ENCODE measurements at regions of chr2 and their contacts with region 1.

Region 1: DNA sequence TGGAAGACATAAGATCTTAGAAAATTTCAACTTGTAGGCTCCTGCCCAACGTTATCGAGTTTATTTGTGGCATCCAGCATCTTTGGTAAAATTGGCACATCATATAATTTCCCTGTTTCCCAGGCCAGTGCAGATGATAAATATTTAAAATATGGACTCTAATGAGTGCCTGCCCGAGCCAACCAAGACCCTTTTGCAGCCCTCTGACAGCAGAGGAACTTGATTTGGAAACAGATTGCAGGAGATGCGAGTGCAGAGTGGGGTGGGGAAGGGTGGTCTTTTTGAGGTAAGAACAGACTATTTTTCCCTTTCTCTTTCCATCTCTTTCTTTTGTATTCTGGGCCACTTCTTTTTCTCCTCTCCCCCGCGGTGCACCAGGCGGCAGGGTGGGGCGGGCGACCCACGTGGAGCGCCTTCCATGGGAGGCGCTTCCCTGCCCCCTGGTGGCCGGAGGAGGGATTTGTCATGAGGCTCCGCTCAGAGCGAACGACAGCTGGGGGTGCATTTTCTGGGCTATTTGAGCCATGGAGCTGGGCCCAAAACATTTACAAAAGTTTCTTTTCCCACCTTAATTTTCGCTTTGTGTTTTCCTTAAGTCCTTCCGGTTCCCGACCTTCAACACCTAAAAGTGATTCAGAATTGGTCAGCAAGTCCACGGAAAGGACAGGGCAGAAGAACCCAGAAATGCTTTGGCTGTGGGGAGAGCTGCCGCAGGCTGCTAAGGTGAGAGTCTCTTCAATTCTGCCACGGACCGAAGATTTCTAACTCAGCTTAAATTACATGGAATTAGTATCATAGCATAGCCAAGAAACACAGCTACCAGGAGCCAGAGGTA is 32.7 kb downstream of the LPIN1 start:
- DNase-seq: peak; percentile 62
- H3K4me3 ChIP-seq: no peak overlapping the region
- H3K27ac ChIP-seq: peak overlapping the region; percentile 44
- H3K4me1 ChIP-seq: peaks cover 25% of the 10 kb centered on the region
- H3K27me3 ChIP-seq: no peaks in the 10 kb centered on the region
- CTCF ChIP-seq: peak; percentile 94 to 96
- POLR2A ChIP-seq: no peak

Region 2: GRCh38 chr2:11477994-11478393 is 301.1 kb before region 1 on chr2:
- CTCF ChIA-PET with region 1: interaction called, 7 read pairs
- POLR2A ChIA-PET with region 1: no interaction called
- dilution Hi-C with region 1: no loop called
- intact Hi-C with region 1: loop called (anchors 1 kb)
- DNase-seq: peak; percentile 69
- H3K4me3 ChIP-seq: no peak overlapping the region
- H3K27ac ChIP-seq: no peak overlapping the region
- H3K4me1 ChIP-seq: no peaks in the 10 kb centered on the region
- H3K27me3 ChIP-seq: peaks cover 25 to 41% of the 10 kb centered on the region in 2 experiments
- CTCF ChIP-seq: peak; percentile 68 to 73
- POLR2A ChIP-seq: no peak

Region 3: GRCh38 chr2:11598228-11598731 is 180.9 kb before region 1 on chr2:
- CTCF ChIA-PET with region 1: interaction called, 3 read pairs
- POLR2A ChIA-PET with region 1: no interaction called
- dilution Hi-C with region 1: no loop called
- intact Hi-C with region 1: loop called (anchors 1 kb)
- DNase-seq: no peak
- H3K4me3 ChIP-seq: no peak overlapping the region
- H3K27ac ChIP-seq: no peak overlapping the region
- H3K4me1 ChIP-seq: peaks cover 17% of the 10 kb centered on the region
- H3K27me3 ChIP-seq: peaks cover 0 to 2% of the 10 kb centered on the region in 2 experiments
- CTCF ChIP-seq: no peak
- POLR2A ChIP-seq: no peak

Region 4: DNA sequence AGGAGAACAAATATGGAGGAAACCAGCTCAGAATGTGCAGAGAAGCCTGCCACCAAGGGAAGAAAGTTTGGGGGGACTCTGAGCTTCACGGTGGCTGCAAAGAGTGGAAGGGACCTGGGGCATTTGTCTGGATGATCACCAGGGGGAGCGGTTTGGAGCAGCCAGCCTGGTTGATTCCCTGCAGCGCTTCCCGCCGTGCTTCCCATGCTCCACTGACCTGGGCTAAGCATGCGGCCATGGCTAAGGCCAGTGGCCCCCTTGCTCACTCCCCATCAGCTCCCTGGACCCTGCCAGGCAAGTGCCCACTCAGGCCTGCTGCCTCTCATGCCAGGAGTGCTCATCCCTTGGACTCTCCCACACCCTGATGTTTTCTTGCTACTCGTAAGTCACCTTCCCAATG is 136.2 kb before region 1 on chr2:
- CTCF ChIA-PET with region 1: no interaction called
- POLR2A ChIA-PET with region 1: no interaction called
- dilution Hi-C with region 1: no loop called
- intact Hi-C with region 1: no loop called
- DNase-seq: no peak
- H3K4me3 ChIP-seq: no peak overlapping the region
- H3K27ac ChIP-seq: no peak overlapping the region
- H3K4me1 ChIP-seq: no peaks in the 10 kb centered on the region
- H3K27me3 ChIP-seq: peaks cover 0 to 2% of the 10 kb centered on the region in 2 experiments
- CTCF ChIP-seq: no peak
- POLR2A ChIP-seq: no peak

Region 5: DNA sequence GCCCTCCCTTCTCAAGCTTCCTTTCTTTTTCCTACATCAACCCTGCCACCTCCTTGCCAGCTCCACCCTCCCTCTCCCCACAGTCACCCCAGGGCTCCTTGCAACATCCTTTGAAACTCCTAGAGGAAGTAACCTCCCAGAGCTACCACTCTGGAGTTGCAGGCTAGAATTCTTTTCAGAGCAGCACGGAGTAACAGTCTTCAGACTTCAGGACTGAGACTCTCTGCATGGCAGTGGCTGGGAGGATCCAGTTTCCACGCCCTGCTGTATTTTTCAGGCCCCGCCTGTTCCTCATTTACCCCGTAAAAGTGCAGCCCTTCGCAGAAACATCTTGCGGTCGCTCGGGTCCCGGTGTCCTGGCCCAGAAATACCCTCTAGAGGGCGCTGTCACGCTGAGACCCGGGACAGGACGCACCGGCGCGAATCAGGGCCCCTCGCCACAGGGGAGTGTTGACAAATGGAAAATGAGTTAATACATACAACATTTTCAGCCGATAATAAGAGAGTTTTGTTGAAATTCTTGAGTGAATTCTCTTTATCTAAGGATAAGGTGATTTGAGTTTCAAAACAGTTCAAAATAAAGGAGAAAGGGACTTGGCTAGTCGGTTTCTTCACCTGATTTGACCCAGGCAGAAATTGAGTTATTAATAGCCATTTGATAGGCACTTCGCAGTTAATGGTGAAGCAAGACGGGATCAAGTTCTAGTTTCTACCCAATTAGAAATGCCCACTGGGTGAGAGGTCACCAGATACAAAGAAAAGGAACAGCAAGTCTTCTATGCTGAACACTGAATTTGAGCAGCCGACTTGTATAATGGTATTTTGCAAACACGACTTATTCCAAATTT is 90.7 kb before region 1 on chr2:
- CTCF ChIA-PET with region 1: interaction called, 188 read pairs
- POLR2A ChIA-PET with region 1: no interaction called
- dilution Hi-C with region 1: no loop called
- intact Hi-C with region 1: loop called (anchors 1 kb)
- DNase-seq: peak; percentile 84
- H3K4me3 ChIP-seq: peak overlapping the region in 1 of 3 experiments; percentile 7
- H3K27ac ChIP-seq: no peak overlapping the region
- H3K4me1 ChIP-seq: peaks cover 3% of the 10 kb centered on the region
- H3K27me3 ChIP-seq: peaks cover 4 to 8% of the 10 kb centered on the region in 2 experiments
- CTCF ChIP-seq: peak; percentile 88 to 91
- POLR2A ChIP-seq: no peak

Region 6: DNA sequence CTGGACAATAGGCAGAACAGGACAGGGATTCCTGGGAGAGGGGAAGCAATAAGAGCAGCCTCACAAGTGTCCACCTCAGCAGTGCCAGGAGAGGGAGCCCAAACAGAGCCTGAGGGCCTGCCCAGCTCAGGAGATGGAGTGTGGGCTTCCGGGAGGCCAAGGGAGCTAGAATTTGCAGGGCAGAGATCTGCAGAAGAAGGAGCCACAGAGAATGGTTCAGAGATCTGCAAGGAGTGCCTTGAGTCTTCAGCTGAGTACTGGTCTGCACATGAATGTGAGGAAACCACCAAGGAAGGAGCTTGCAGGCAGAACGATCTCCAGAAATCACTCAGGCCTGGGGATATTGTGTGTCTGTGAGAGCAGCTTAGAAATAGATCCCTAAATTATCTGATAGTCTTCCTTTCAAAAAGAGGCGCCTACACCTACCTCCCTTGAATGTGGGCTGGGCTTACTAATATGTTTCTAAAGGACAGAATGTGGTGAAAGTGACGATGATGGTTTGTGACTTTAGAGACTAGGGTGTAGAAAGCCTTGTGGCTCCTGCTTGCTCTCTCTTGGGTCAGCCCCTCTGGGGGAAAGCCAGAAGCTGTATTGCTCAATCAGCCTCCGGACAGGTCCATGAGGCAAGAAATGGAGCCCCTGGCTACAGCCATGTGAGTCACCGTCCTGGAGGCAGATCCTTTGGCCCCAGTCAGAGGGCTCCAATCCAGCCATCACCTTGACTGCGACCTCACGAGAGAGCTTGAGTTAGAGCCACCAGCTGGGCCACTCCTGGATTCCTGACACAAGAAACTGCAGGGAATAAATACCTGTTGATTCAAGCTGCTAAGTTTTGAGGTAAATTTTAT is 40.3 kb before region 1 on chr2:
- CTCF ChIA-PET with region 1: interaction called, 80 read pairs
- POLR2A ChIA-PET with region 1: no interaction called
- dilution Hi-C with region 1: no loop called
- intact Hi-C with region 1: loop called (anchors 1 kb)
- DNase-seq: peak; percentile 52
- H3K4me3 ChIP-seq: no peak overlapping the region
- H3K27ac ChIP-seq: no peak overlapping the region
- H3K4me1 ChIP-seq: peaks cover 23% of the 10 kb centered on the region
- H3K27me3 ChIP-seq: peaks cover 6 to 10% of the 10 kb centered on the region in 2 experiments
- CTCF ChIP-seq: peak; percentile 47 to 71
- POLR2A ChIP-seq: no peak

Region 7: DNA sequence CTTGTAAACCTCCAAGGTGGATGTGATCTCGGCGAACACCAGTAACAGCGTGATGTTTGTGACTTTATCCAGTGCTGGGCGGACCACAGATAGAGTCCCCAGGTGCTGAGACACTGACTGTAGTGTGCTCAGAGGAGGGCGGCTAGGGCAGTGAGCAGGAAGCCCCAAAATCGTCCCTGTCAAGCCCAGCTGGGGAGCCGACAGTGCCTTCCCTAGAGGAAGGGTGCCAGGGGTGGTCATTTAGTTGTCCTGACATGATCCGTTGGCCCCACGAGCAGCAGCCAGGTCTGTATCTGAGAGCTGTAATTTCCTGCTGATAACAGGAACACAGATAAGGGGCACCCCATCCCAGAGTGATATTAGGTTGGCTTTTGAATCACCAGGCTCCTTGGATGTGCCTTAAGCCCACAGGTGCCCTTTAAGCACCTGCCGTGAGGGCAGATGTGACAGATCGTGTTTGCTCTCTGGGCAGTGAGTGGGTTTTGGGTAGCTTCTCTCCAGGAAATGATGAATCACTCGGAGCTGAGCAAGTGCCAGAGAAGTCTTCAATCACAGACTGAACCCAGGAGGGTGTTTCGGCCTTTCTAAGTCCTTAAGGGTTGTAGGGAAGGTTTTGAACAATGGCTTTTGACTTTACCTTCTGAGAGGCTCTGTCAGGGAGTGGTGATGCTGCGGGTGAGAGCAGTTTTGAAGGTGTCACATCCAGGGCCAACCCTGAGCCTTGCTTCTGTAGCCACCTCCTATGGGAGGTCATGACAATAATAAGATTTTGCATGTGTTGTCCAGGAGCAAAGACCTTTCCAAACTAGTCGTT is 25.0 kb before region 1 on chr2:
- CTCF ChIA-PET with region 1: interaction called, 33 read pairs
- POLR2A ChIA-PET with region 1: no interaction called
- dilution Hi-C with region 1: no loop called
- intact Hi-C with region 1: loop called (anchors 1 kb)
- DNase-seq: peak; percentile 86
- H3K4me3 ChIP-seq: peak overlapping the region in 1 of 3 experiments; percentile 41
- H3K27ac ChIP-seq: peak overlapping the region; percentile 78
- H3K4me1 ChIP-seq: peaks cover 30% of the 10 kb centered on the region
- H3K27me3 ChIP-seq: no peaks in the 10 kb centered on the region
- CTCF ChIP-seq: no peak
- POLR2A ChIP-seq: no peak